CD4-positive, alpha-beta memory T cell (primary cell): ENCODE measurements at regions of chr3 and their contacts with region 1.

Region 1: GRCh38 chr3:69161587-69162307 is 39.4 kb upstream of the LMOD3 start:
- DNase-seq: peak; percentile 52 to 60 (median 56)
- H3K4me3 ChIP-seq: no peak overlapping the region
- H3K4me3 Mint-ChIP-seq: no peak overlapping the region
- H3K27ac ChIP-seq: no peak overlapping the region
- H3K27ac Mint-ChIP-seq: no peak overlapping the region
- H3K4me1 ChIP-seq: no peaks in the 10 kb centered on the region
- H3K4me1 Mint-ChIP-seq: peaks cover 5 to 9% (median 5%) of the 10 kb centered on the region in 4 donors
- H3K27me3 ChIP-seq: no peaks in the 10 kb centered on the region
- H3K27me3 Mint-ChIP-seq: peaks cover 2 to 6% of the 10 kb centered on the region in 2 donors

Region 2: DNA sequence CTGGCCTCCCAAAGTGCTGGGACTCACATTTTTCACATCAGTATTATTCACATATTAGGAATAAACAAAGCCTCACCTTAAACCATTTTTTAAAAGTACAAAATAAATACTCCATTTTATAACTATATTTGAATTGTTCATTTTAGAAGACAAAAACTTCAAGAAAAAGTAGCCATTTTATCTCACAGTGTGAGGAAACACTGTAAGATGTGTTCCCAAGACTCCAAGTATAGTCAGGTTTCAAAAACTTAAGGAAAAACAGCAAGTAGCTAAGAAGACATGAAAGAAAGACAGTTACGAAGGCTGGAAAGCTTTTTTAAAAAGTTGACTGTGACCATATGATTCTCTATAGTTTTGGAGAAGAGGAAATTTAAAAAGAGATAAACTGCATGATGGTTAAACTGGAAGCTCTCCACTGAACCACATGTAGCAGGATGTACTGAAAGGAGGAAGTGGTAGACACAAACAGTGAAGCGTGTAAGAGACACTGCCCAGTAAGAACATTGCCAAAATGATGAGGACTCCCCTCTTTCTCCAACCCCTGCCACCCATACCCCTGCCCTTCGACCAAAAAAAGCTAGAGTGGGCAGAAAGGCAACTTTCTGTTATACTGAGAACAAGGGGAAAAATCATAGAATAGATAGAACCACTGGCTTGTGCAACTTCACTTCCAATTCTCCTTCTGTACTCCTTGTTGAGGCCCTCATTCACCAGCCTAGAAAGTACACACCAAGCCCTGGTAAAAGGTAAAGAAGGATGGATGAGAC is 103.4 kb before region 1 on chr3:
- CTCF ChIA-PET with region 1: no interaction called
- POLR2A ChIA-PET with region 1: no interaction called
- intact Hi-C with region 1: no loop called
- DNase-seq: peak in 4 of 5 donors; percentile 33 to 55 (median 45)
- H3K4me3 ChIP-seq: no peak overlapping the region
- H3K4me3 Mint-ChIP-seq: peak overlapping the region in 7 of 8 donors; percentile 27 to 75 (median 65)
- H3K27ac ChIP-seq: peak overlapping the region; percentile 17
- H3K27ac Mint-ChIP-seq: peak overlapping the region; percentile 83 to 96 (median 89)
- H3K4me1 ChIP-seq: peaks cover 32% of the 10 kb centered on the region
- H3K4me1 Mint-ChIP-seq: peaks cover 19 to 48% (median 28%) of the 10 kb centered on the region in 4 donors
- H3K27me3 ChIP-seq: no peaks in the 10 kb centered on the region
- H3K27me3 Mint-ChIP-seq: no peaks in the 10 kb centered on the region

Region 3: DNA sequence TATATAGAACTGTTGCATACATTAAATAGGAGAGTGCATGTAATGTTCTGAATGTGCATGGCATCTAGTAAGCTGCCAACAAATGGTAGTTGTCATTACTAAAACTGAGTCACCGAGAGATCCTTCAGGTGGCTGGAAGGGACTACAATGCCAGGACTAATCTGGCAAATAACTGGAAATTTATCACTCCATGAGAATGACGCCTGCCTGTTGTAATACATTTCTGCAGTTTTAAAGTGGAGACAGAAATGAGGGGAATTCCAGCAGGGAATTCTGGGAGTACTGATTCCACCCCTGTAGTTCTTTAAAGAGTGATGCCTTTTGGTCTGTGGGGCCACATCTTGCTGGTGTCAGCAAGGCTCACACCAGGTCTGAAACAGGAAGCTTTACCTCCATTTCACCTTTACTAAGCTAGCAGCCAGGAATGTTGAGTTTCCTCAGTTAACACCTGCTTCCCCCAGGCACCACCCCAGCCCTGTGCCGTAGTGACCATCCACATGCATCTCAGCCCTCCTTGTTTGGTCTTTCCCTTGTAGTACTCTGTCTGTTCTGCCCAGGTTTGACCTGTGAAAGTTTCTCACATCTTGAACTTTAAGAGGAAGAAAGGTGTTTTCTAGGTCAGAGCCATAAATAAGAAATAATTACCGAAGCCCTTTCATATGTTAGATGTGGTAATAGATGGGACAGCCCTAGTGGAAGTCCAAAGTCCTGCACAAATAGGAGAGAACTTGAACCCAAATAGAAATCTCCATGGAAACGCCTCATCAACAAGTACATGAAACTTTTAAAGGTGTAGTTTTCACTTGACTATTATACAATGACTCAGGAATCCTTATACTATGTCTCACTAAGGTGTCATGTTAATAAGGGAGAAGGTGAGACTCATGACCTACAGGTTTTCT is 17.3 kb after region 1 on chr3:
- CTCF ChIA-PET with region 1: interaction called, 49 read pairs
- POLR2A ChIA-PET with region 1: no interaction called
- intact Hi-C with region 1: no loop called
- DNase-seq: no peak
- H3K4me3 ChIP-seq: no peak overlapping the region
- H3K4me3 Mint-ChIP-seq: peak overlapping the region in 5 of 8 donors; percentile 0 to 46 (median 11)
- H3K27ac ChIP-seq: no peak overlapping the region
- H3K27ac Mint-ChIP-seq: peak overlapping the region in 6 of 7 donors; percentile 35 to 86 (median 64)
- H3K4me1 ChIP-seq: peaks cover 15% of the 10 kb centered on the region
- H3K4me1 Mint-ChIP-seq: peaks cover 11 to 25% (median 19%) of the 10 kb centered on the region in 4 donors
- H3K27me3 ChIP-seq: no peaks in the 10 kb centered on the region
- H3K27me3 Mint-ChIP-seq: no peaks in the 10 kb centered on the region

Region 4: GRCh38 chr3:69200384-69201068 is 38.8 kb after region 1 on chr3:
- CTCF ChIA-PET with region 1: interaction called, 16 read pairs
- POLR2A ChIA-PET with region 1: no interaction called
- intact Hi-C with region 1: no loop called
- DNase-seq: peak; percentile 20 to 47 (median 27)
- H3K4me3 ChIP-seq: peak overlapping the region; percentile 82 to 94
- H3K4me3 Mint-ChIP-seq: peak overlapping the region; percentile 92 to 97 (median 96)
- H3K27ac ChIP-seq: peak overlapping the region; percentile 79
- H3K27ac Mint-ChIP-seq: peak overlapping the region; percentile 94 to 98 (median 97)
- H3K4me1 ChIP-seq: peaks cover 28% of the 10 kb centered on the region
- H3K4me1 Mint-ChIP-seq: peaks cover 29 to 64% (median 43%) of the 10 kb centered on the region in 4 donors
- H3K27me3 ChIP-seq: no peaks in the 10 kb centered on the region
- H3K27me3 Mint-ChIP-seq: no peaks in the 10 kb centered on the region

Region 5: DNA sequence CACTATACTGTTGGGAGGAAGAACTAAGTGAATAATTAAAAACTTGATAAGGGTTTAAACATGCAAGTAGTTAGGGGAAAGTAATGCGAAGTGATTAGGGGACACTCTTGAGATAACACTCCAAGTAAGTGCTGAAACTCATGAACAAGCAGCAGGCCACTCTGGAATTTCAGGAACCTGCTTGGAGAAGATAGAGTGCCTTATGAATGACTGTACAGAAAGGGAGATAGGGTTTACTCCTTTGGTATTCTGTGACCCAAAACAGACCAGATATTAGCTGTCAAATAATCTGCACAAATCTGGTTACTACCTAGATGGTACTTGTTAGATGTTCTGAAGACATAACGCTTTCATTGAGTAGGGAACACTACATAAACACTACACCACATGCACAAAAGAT is 138.5 kb after region 1 on chr3:
- CTCF ChIA-PET with region 1: interaction called, 529 read pairs
- POLR2A ChIA-PET with region 1: interaction called, 19 read pairs
- intact Hi-C with region 1: no loop called
- DNase-seq: no peak
- H3K4me3 ChIP-seq: no peak overlapping the region
- H3K4me3 Mint-ChIP-seq: no peak overlapping the region
- H3K27ac ChIP-seq: no peak overlapping the region
- H3K27ac Mint-ChIP-seq: no peak overlapping the region
- H3K4me1 ChIP-seq: no peaks in the 10 kb centered on the region
- H3K4me1 Mint-ChIP-seq: no peaks in the 10 kb centered on the region
- H3K27me3 ChIP-seq: no peaks in the 10 kb centered on the region
- H3K27me3 Mint-ChIP-seq: peaks cover 0 to 2% of the 10 kb centered on the region in 2 donors

Region 6: DNA sequence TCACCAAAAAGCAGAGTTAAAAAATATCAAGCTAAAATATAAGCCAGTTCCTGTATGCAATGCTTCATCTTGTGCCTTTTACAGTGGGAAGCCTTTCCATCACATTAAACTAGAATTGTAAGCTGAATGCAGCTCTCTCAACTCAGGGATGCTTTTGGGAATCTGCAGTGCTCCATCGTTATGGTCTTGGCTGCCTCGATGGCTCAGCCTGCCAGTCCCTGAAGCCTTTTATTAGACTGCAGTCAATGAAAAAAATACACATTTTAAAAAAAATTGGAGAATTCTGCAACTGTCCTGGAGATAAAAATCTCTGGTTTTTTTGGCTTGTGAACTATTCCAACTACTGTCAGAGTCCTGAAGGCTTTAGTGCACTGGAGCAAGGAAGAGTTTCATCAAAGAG is 171.2 kb after region 1 on chr3:
- CTCF ChIA-PET with region 1: no interaction called
- POLR2A ChIA-PET with region 1: no interaction called
- intact Hi-C with region 1: no loop called
- DNase-seq: no peak
- H3K4me3 ChIP-seq: no peak overlapping the region
- H3K4me3 Mint-ChIP-seq: no peak overlapping the region
- H3K27ac ChIP-seq: no peak overlapping the region
- H3K27ac Mint-ChIP-seq: no peak overlapping the region
- H3K4me1 ChIP-seq: peaks cover 12% of the 10 kb centered on the region
- H3K4me1 Mint-ChIP-seq: peaks cover 9 to 11% (median 10%) of the 10 kb centered on the region in 4 donors
- H3K27me3 ChIP-seq: no peaks in the 10 kb centered on the region
- H3K27me3 Mint-ChIP-seq: peaks cover 0 to 5% of the 10 kb centered on the region in 2 donors

Region 7: GRCh38 chr3:69410250-69410649 is 248.5 kb after region 1 on chr3:
- CTCF ChIA-PET with region 1: interaction called, 62 read pairs
- POLR2A ChIA-PET with region 1: no interaction called
- intact Hi-C with region 1: loop called (anchors 1 kb)
- DNase-seq: peak; percentile 48 to 63 (median 56)
- H3K4me3 ChIP-seq: no peak overlapping the region
- H3K4me3 Mint-ChIP-seq: no peak overlapping the region
- H3K27ac ChIP-seq: no peak overlapping the region
- H3K27ac Mint-ChIP-seq: no peak overlapping the region
- H3K4me1 ChIP-seq: no peaks in the 10 kb centered on the region
- H3K4me1 Mint-ChIP-seq: peaks cover 4 to 7% (median 5%) of the 10 kb centered on the region in 4 donors
- H3K27me3 ChIP-seq: no peaks in the 10 kb centered on the region
- H3K27me3 Mint-ChIP-seq: peaks cover 2 to 3% of the 10 kb centered on the region in 2 donors

Region 8: GRCh38 chr3:69671082-69671952 is 509.6 kb after region 1 on chr3:
- CTCF ChIA-PET with region 1: no interaction called
- POLR2A ChIA-PET with region 1: no interaction called
- intact Hi-C with region 1: loop called (anchors 5 kb)
- DNase-seq: no peak
- H3K4me3 ChIP-seq: no peak overlapping the region
- H3K4me3 Mint-ChIP-seq: no peak overlapping the region
- H3K27ac ChIP-seq: no peak overlapping the region
- H3K27ac Mint-ChIP-seq: no peak overlapping the region
- H3K4me1 ChIP-seq: no peaks in the 10 kb centered on the region
- H3K4me1 Mint-ChIP-seq: no peaks in the 10 kb centered on the region
- H3K27me3 ChIP-seq: no peaks in the 10 kb centered on the region
- H3K27me3 Mint-ChIP-seq: peaks cover 3 to 4% of the 10 kb centered on the region in 2 donors